Heart left ventricle (tissue), 16 donors: ENCODE measurements at regions of chr2 and their contacts with region 1.

Region 1: GRCh38 chr2:238158527-238159070 is at the start of gene ERFE:
- DNase-seq: peak in 3 of 5 donors; percentile 17 to 70 (median 36)
- ATAC-seq: peak in 3 of 4 donors; percentile 9 to 40 (median 22)
- H3K4me3 ChIP-seq: peak within 1 kb of the TSS in 8 of 12 donors; percentile 19 to 44 (median 34)
- H3K27ac ChIP-seq: no peak within 1 kb of the TSS
- H3K4me1 ChIP-seq: peaks cover 0 to 26% (median 6%) of the 10 kb centered on the region in 12 donors
- H3K27me3 ChIP-seq: peaks cover 6 to 34% (median 17%) of the 10 kb centered on the region in 9 donors
- CTCF ChIP-seq: peak; percentile 20 to 63 (median 44)
- POLR2A ChIP-seq: no peak
- total RNA-seq, gene ERFE: 0.23 to 1.8 (median 0.65) TPM in 6 of 9 donors, not detected in the others

Region 2: DNA sequence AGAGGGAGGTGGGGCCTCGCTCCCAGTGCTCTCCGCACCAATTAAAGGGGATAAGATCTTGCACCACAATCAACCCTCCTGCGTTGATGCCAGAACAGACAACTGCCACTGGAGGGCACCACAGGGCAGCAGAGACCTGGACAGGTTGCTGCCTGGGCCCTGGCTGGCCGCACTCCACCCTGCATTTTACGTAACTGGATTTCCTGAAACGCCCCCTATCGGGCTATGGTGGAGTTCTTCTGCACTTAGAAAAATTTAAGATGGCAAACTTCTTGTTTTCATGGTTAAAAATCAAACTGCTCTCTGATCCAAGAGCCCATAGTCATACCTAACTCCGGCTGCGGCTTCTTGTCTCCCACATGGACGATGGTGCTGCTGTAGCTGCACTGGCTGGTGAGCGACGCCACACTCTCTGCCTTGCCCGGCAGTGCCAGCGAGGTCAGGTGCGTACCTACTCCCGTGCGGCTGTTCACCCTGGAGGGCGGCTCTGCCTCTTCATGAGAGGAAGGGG is 98.0 kb after region 1 on chr2:
- intact Hi-C with region 1: loop called in 5 of 10 experiments (anchors 5 to 10 kb)
- DNase-seq: peak; percentile 39 to 81 (median 78)
- ATAC-seq: peak; percentile 46 to 84 (median 66)
- H3K4me3 ChIP-seq: no peak overlapping the region
- H3K27ac ChIP-seq: no peak overlapping the region
- H3K4me1 ChIP-seq: peaks cover 0 to 13% (median 4%) of the 10 kb centered on the region in 12 donors
- H3K27me3 ChIP-seq: no peaks in the 10 kb centered on the region
- CTCF ChIP-seq: peak; percentile 52 to 83 (median 67)
- POLR2A ChIP-seq: no peak

Region 3: GRCh38 chr2:238263204-238264071 is 104.8 kb after region 1 on chr2:
- intact Hi-C with region 1: loop called in 6 of 10 experiments (anchors 2 to 10 kb)
- DNase-seq: peak; percentile 87 to 94 (median 92)
- ATAC-seq: peak; percentile 64 to 92 (median 84)
- H3K4me3 ChIP-seq: no peak overlapping the region
- H3K27ac ChIP-seq: peak overlapping the region in 11 of 12 donors; percentile 22 to 73 (median 51)
- H3K4me1 ChIP-seq: peaks cover 0 to 38% (median 24%) of the 10 kb centered on the region in 12 donors
- H3K27me3 ChIP-seq: no peaks in the 10 kb centered on the region
- CTCF ChIP-seq: peak; percentile 74 to 88 (median 81)
- POLR2A ChIP-seq: no peak

Region 4: DNA sequence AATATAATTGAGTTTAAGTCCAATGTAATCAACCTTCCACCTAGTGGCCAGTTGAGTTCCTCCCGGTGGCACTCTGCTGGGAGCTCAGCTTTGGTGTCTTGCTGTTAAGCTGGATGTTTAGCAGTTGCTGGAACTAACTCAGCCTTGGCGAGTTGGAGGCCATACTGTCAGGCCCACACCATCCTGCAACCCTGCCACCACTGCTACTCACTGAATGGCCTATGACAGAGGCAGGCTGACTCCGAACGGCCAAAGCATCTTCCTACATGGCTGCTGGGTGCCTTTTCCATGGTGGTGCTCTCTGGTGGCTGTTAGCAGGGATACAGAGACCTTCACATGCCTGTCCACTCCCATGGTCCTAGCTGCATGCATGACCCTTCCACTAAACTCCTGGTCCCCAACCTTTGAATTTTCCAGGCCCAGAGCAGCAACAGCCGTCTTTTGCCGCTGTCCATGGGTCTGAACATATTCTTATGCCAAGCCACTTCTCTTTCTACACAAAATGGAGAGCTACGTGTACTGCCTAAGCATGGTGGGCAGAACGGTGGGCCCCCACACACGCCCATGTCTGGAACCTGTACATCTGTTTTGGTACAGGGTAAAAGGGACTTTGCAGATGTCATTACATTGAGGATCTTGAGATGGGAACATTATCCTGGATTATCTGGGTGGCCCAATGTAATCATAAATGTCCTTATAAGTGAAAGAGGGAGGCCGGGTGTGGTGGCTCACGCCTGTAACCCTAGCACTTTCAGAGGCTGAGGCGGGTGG is 146.7 kb after region 1 on chr2:
- intact Hi-C with region 1: no loop called
- DNase-seq: no peak
- ATAC-seq: no peak
- H3K4me3 ChIP-seq: no peak overlapping the region
- H3K27ac ChIP-seq: no peak overlapping the region
- H3K4me1 ChIP-seq: no peaks in the 10 kb centered on the region
- H3K27me3 ChIP-seq: no peaks in the 10 kb centered on the region
- CTCF ChIP-seq: peak in 5 of 12 donors; percentile 9 to 33 (median 23)
- POLR2A ChIP-seq: no peak

Region 5: GRCh38 chr2:238320246-238320647 is 161.6 kb after region 1 on chr2 and contains the start of gene TRAF3IP1:
- intact Hi-C with region 1: no loop called
- DNase-seq: peak; percentile 94 to 96 (median 95)
- ATAC-seq: peak; percentile 93 to 98 (median 97)
- H3K4me3 ChIP-seq: peak within 1 kb of the TSS; percentile 59 to 96 (median 81)
- H3K27ac ChIP-seq: peak within 1 kb of the TSS in 10 of 12 donors; percentile 32 to 76 (median 56)
- H3K4me1 ChIP-seq: peaks cover 0 to 29% (median 14%) of the 10 kb centered on the region in 12 donors
- H3K27me3 ChIP-seq: no peaks in the 10 kb centered on the region
- CTCF ChIP-seq: peak in 1 of 12 donors; percentile 7
- POLR2A ChIP-seq: no peak
- total RNA-seq, gene TRAF3IP1: 3.8 to 20.3 (median 13.8) TPM